ENCODE measurements at regions of chr22 and their contacts with region 1.

Region 1: DNA sequence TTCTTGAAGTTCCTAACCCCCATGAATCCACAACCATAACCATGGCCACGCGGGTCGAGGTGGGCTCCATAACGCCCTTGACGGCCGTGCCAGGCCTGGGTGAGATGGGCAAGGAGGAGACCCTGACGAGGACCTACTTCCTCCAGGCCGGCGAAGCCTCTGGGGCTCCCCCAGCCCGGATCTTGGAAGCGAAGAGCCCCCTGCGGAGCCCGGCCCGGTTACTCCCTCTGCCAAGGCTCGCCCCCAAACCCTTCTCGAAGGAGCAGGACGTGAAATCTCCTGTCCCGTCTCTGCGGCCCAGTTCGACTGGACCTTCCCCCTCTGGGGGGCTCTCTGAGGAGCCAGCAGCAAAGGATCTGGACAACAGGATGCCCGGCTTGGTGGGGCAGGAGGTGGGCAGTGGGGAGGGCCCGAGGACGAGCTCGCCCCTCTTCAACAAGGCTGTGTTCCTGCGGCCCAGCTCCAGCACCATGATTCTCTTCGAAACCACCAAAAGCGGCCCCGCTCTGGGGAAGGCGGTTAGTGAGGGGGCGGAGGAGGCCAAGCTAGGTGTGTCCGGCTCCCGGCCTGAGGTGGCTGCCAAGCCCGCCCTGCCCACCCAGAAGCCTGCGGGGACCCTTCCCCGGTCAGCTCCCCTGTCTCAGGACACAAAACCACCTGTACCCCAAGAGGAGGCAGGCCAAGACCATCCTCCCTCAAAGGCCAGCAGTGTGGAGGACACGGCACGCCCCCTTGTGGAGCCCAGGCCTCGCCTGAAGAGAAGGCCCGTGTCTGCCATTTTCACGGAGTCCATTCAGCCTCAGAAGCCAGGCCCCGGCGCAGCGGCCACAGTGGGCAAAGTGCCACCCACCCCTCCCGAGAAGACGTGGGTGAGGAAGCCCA is 75.7 kb downstream of the KIAA1671 start:
- DNase-seq: no peak
- ATAC-seq: no peak
- H3K4me3 ChIP-seq: no peak overlapping the region
- H3K27ac ChIP-seq: no peak overlapping the region
- H3K4me1 ChIP-seq: no peaks in the 10 kb centered on the region
- H3K27me3 ChIP-seq: no peaks in the 10 kb centered on the region
- CTCF ChIP-seq: no peak
- POLR2A ChIP-seq: no peak
- RAD21 ChIP-seq: no peak

Region 2: DNA sequence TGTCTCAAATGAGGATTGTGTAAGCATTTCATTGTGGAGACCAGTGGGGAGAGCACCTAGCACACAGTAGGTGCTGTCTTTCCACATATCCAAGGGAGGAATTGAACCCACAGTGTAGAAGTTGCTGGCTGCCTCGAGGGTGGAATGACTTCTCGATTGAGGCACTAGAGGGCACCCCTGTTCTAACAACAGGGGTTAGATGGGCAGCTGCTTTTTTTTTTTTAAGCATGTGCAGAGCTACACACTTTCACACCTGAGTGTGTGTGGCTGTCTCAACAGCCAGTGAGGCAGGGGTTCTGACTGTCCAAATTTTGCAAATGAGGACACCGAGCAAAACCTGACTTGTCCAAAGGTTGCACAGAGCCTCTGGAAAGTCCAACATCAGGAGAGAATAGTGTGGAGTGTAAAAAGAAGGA is 53.2 kb after region 1 on chr22:
- CTCF ChIA-PET with region 1: no interaction called
- POLR2A ChIA-PET with region 1: no interaction called
- dilution Hi-C with region 1: no loop called
- in situ Hi-C with region 1: loop called (anchors 10 kb)
- intact Hi-C with region 1: no loop called
- DNase-seq: peak; percentile 4
- ATAC-seq: peak; percentile 35; the same call in 1 of the 2 replicates
- H3K4me3 ChIP-seq: no peak overlapping the region
- H3K27ac ChIP-seq: no peak overlapping the region
- H3K4me1 ChIP-seq: no peaks in the 10 kb centered on the region
- H3K27me3 ChIP-seq: no peaks in the 10 kb centered on the region
- CTCF ChIP-seq: peak; percentile 24; the same call in 1 of the 2 replicates
- POLR2A ChIP-seq: no peak
- RAD21 ChIP-seq: no peak